AG04449 (cell line): ENCODE measurements at regions of chr2 and their contacts with region 1.

Region 1: GRCh38 chr2:191051825-191052778 is 38.1 kb upstream of the STAT1 start:
- DNase-seq: no peak
- H3K4me3 ChIP-seq: no peak overlapping the region
- CTCF ChIP-seq: peak; percentile 26

Region 2: GRCh38 chr2:189874586-189875320 is 1177.3 kb before region 1 on chr2:
- CTCF ChIA-PET with region 1: no interaction called
- POLR2A ChIA-PET with region 1: no interaction called
- DNase-seq: no peak
- H3K4me3 ChIP-seq: no peak overlapping the region
- CTCF ChIP-seq: no peak

Region 3: DNA sequence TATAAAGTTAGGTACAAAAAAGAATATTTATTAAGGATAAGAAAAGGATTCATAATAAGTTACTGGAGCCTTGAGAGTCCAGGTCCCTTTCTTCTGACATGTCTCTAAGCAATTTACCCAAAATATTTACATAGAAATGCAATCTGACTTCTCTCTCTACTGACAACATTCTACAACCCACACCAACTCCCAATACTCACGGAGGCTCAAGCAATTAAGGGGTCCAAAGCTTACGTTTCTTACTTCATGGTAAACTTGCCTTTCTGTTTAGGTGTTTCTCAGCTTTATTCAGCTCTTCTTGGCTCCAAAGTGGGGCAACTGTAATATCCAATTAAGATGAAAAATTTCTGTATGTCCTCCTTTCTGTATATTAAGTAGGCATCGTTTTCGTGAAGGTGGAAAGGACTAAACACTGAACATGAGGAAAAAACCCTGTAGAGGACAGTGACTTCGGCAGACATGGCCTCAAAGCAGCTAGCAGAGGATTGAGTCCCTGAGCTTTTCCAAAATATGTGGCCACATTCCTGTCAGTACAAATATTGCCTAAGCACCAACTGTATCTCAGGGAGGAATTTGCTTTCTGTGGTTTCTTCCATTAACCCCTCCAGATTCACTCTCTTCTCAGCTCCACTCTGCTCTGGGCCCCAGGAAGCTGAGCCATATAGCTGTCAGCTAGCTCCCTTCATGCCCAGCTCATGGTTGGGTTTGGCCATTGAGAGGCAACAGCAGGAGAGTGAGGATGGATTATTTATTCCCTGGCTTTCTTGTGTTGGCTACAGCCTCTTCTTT is 239.4 kb before region 1 on chr2:
- CTCF ChIA-PET with region 1: no interaction called
- POLR2A ChIA-PET with region 1: no interaction called
- DNase-seq: no peak
- H3K4me3 ChIP-seq: no peak overlapping the region
- CTCF ChIP-seq: no peak

Region 4: DNA sequence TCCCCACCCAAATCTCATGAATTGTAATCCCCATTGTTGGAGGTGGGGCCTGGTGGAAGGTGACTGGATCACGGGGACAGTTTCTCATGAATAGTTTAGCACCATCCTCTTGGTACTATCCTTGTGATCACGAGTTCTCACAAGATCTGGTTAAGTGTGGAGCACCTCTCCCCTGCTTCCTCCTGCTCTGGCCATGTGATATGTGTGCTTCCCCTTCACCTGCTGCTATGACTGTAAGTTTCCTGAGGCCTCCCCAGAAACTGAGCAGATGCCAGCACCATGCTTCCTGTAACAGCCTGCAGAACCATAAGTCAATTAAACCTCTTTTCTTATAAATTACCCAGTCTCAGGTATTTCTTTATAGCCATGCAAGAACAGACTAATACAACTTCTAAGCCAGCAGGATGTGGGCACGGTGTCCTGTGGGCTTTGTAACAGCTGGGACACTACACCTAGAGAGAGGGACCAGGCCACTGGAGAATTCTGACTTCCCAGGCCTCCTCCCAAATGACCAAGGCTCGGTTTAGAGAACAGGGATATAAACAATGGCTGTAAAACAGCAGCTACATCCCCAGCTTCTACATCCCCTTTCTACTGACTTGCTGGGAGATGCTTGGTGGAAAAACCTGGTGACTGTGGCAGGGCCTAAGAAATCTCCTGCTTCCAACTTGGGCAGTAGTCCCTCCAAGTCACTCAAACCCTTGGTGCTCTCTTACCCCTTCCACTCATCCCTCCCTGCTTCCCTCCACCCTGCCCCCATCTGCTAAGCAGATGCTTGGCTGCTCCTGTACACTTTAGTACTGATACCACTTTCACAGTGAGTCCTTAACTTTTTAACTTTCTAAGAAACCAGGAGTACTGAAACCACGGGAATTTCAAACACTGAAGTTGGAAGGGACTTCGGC is 48.4 kb before region 1 on chr2:
- CTCF ChIA-PET with region 1: no interaction called
- POLR2A ChIA-PET with region 1: no interaction called
- DNase-seq: no peak
- H3K4me3 ChIP-seq: no peak overlapping the region
- CTCF ChIP-seq: no peak

Region 5: GRCh38 chr2:191013932-191014652 is 38.0 kb before region 1 on chr2 and contains the start of gene STAT1:
- CTCF ChIA-PET with region 1: interaction called, 18 read pairs
- POLR2A ChIA-PET with region 1: interaction called, 9 read pairs
- DNase-seq: peak; percentile 77
- H3K4me3 ChIP-seq: peak within 1 kb of the TSS; percentile 95
- CTCF ChIP-seq: peak; percentile 2

Region 6: GRCh38 chr2:191066197-191066918 is 14.3 kb after region 1 on chr2:
- CTCF ChIA-PET with region 1: interaction called, 61 read pairs
- POLR2A ChIA-PET with region 1: interaction called, 4 read pairs
- DNase-seq: no peak
- H3K4me3 ChIP-seq: no peak overlapping the region
- CTCF ChIP-seq: no peak

Region 7: DNA sequence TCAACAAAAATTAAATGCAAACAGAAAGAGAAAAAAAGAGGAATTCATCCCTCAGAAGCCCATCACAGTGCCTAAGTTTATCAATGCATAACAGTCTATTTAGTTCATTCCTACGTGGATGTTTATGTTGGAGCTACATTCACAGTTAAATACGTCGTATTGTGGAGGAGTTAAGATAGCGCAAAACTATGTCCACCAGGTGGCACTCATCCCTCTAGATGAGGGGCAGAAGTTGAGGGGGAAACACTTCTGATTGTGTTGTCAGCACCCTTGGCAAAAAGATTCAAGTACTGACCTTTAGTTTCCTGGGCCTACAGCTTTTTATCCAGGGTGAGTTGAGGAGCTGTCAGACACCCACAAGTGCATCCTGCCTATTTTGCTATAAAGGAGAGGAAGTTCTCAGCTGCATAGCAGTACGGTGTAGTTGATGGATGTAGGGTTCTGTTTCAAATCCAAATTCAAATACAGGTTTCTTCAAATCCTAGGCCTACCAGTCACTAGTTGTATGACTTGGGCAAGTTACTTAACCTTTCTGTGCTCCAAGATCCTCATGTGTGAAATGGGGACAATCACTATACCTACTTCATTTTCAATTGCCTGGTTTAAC is 166.3 kb after region 1 on chr2:
- CTCF ChIA-PET with region 1: interaction called, 19 read pairs
- POLR2A ChIA-PET with region 1: no interaction called
- DNase-seq: no peak
- H3K4me3 ChIP-seq: no peak overlapping the region
- CTCF ChIP-seq: peak; percentile 60

Region 8: GRCh38 chr2:191515551-191515950 is 463.4 kb after region 1 on chr2:
- CTCF ChIA-PET with region 1: interaction called, 17 read pairs
- POLR2A ChIA-PET with region 1: no interaction called
- DNase-seq: no peak
- H3K4me3 ChIP-seq: no peak overlapping the region
- CTCF ChIP-seq: no peak